ENCODE measurements at regions of chr22 and their contacts with region 1.

Region 1: DNA sequence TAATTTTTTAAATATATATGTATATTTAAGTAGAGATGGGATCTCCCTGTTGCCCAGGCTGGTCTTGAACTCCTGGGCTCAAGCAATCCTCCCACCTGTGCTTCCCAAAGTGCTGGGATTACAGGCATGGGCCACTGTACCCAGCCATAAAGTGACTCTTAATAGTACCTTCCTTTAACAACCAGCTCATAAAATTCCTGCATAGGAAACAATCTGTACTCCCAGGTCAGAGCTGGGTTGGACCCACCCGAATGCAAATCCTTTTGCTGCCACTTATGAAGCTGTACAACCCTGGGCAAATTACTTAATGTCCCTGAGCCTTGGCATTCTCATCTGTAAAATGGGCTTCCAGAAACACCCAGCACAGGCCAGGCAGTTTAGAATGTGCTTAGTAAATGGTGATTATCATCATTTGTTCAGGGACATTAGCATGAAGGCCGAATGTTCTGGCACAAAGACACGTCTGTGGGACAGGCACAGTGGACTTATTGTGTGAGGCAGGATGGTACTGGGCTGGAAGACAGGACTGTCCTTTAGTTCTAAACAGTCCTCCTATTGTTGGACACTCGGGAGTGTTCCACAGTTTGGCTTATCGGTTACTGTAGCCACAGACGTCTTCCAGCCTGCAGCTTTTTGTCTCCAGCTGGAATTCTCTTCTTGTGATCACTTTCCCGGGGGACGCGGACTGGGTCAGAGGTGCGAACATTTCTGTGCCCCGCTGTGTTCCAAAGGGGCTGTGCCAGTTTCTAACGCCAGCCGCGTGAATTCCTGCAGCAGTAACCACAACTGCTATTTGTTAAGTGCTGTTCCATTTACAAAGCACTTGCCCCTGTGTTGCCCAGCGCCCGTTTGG is 6.0 kb downstream of the PDXP start:
- DNase-seq: no peak
- ATAC-seq: no peak
- H3K4me3 ChIP-seq: no peak overlapping the region
- H3K27ac ChIP-seq: no peak overlapping the region
- H3K4me1 ChIP-seq: no peaks in the 10 kb centered on the region
- H3K27me3 ChIP-seq: no peaks in the 10 kb centered on the region

Region 2: GRCh38 chr22:37726241-37726887 is 61.9 kb after region 1 on chr22:
- intact Hi-C with region 1: loop called in 1 of 2 experiments (anchors 2 kb)
- DNase-seq: no peak
- ATAC-seq: peak; percentile 33
- H3K4me3 ChIP-seq: no peak overlapping the region
- H3K27ac ChIP-seq: no peak overlapping the region
- H3K4me1 ChIP-seq: peaks cover 0 to 3% of the 10 kb centered on the region in 2 donors
- H3K27me3 ChIP-seq: no peaks in the 10 kb centered on the region

Measured in aorta (tissue), 5 donors.